ENCODE measurements at regions of chr13 and their contacts with region 1.

Region 1: DNA sequence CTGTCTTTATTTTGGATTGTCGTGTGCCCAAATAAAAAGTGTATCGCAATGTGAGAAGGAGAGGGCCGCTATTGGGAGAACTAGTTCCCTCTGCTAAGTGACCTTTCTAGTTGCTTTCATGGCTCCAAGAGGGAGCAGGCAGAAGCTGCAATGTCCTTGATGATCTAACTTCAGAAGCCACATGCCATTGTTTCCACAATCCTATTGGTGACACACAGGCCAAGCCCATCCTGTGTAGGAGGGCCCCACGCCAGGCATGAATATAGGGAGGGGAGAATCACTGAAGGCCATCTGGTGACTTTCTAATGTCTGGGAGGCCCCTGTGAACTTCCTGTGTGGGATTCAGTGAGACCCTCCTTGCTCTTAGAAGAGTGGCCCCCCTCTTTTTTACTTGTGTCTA is 47.8 kb upstream of the KPNA3 start:
- DNase-seq: no peak
- CTCF ChIP-seq: no peak

Region 2: GRCh38 chr13:49190901-49191300 is 649.4 kb before region 1 on chr13:
- in situ Hi-C with region 1: no loop called
- DNase-seq: no peak
- CTCF ChIP-seq: no peak

Region 3: DNA sequence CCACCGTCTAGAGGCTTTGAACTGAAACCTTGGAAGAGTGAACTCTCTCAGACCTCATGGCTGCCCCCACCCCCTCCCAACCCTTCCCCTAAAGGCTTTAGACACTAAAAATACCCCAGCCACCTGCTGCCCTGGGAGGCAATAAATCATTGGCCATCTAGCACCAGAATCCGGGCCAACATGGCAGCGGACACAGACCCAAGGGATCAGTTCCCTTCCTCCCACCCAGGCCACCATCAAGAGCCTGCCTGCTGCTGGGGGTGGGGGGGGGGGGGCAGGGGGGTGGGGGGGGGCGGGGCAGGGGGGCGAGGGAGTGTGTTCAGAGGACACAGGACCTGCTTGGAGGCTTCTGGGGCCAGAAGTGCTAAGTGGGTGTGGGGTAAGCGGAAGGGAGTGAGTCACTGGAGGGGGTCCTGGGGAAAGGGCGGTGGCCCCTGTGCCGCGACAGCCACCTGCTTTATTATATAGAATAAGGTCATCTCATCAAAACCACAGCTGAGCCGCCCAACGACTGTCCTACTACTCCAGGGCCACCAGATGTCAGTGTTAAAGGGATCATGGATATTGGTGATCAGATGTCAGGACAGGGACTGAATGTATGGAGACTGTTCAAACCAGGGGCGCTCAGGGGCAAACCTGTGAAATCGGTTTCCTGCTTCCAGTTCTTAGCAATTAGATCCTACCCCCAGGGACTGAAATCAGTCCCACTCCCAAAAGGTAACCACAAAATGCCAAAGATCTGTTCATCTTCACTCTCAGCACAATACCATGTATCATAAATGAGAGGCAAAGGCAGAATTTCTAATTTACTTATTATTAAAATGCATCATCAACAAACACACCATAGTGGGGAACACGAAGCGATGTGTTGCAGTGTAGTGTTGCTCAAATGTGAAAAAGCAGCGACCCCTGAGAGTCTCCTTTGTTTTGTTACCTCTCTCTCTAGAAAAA is 187.6 kb before region 1 on chr13:
- in situ Hi-C with region 1: loop called (anchors 10 kb)
- DNase-seq: peak; percentile 64
- CTCF ChIP-seq: peak; percentile 54

Measured in GM13977 (cell line).